ENCODE measurements at regions of chr1 and their contacts with region 1.

Region 1: GRCh38 chr1:95035536-95035935 is 37.2 kb downstream of the ALG14 start:
- DNase-seq: no peak
- CTCF ChIP-seq: no peak

Region 2: GRCh38 chr1:94863919-94864318 is 171.6 kb before region 1 on chr1:
- in situ Hi-C with region 1: loop called (anchors 5 kb)
- DNase-seq: no peak
- CTCF ChIP-seq: no peak